Activated T-helper 1 cell treated with anti-CD3 and anti-CD28 coated beads, Interleukin-12 subunit alpha, Interleukin-12 subunit beta, Interleukin-2, Interleukin-4 antibody, amounts not matched to agents 30 ng/mL and 10 ng/mL and 1 ng/mL, durations not matched to agents 14 hours and 24 hours and 36 hours (primary cell): ENCODE measurements at regions of chr16 and their contacts with region 1.

Region 1: DNA sequence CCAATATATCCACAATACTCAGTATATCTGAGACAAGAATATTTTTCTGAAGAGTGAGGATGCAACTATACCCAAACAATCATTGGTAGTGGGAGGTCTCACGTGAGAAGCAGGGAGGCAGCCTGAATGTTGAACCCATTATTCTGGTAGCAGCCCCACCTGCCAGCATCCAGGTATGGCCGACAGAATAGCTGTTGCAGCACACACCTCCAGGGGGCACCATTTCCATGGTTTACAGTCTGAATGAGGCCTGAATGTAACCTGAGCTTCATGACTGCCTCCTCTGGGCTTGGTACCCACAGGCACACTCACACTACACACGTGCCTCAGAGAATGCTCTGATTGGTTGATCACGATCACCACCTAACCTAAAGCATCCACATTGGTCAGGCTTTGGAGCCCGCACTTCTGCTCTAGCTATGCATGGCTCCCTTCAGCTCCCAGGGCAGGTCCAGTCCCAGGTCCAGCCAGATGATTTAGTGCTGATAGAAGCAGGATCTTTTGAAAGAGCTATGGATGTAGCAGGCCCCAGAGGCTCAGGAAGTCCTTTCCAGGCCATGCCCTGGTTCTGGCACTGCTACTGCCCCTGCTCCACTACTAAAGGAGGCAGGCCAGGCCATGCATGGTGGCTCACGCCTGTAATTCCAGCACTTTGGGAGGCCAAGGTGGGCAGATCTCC is 11.0 kb upstream of the CBFB start:
- DNase-seq: peak; percentile 85
- H3K4me3 Mint-ChIP-seq: peak overlapping the region; percentile 7
- H3K27ac Mint-ChIP-seq: peak overlapping the region; percentile 40
- H3K4me1 Mint-ChIP-seq: peaks cover 40% of the 10 kb centered on the region
- H3K27me3 Mint-ChIP-seq: peaks cover 3% of the 10 kb centered on the region

Region 2: DNA sequence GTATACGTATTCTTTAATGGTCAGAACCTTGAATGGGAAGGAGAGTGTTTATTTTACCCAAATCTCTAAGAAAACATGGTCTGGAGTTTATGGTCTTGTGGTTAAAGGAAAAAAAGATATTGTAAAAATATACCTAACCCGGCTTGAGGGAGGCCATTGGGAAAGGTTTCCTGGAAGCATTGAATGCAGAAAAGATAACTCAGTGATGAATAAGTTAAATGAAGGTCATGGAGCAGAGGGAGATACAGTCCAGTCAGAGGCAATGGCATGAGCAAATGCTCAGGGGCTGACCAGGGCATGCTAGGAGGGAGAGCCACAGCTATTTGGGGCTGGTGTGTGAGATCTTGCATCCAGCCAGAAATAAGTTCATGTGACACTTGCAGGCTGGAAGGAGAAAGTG is 1081.9 kb before region 1 on chr16:
- intact Hi-C with region 1: no loop called
- DNase-seq: no peak
- H3K4me3 Mint-ChIP-seq: no peak overlapping the region
- H3K27ac Mint-ChIP-seq: no peak overlapping the region
- H3K4me1 Mint-ChIP-seq: no peaks in the 10 kb centered on the region
- H3K27me3 Mint-ChIP-seq: no peaks in the 10 kb centered on the region

Region 3: GRCh38 chr16:66858740-66859396 is 159.1 kb before region 1 on chr16:
- intact Hi-C with region 1: no loop called
- DNase-seq: no peak
- H3K4me3 Mint-ChIP-seq: no peak overlapping the region
- H3K27ac Mint-ChIP-seq: no peak overlapping the region
- H3K4me1 Mint-ChIP-seq: no peaks in the 10 kb centered on the region
- H3K27me3 Mint-ChIP-seq: peaks cover 1% of the 10 kb centered on the region

Region 4: GRCh38 chr16:66977341-66978113 is 40.4 kb before region 1 on chr16:
- intact Hi-C with region 1: loop called (anchors 1 kb)
- DNase-seq: peak; percentile 83
- H3K4me3 Mint-ChIP-seq: no peak overlapping the region
- H3K27ac Mint-ChIP-seq: peak overlapping the region; percentile 75
- H3K4me1 Mint-ChIP-seq: peaks cover 57% of the 10 kb centered on the region
- H3K27me3 Mint-ChIP-seq: no peaks in the 10 kb centered on the region

Region 5: GRCh38 chr16:67000384-67001351 is 17.3 kb before region 1 on chr16:
- intact Hi-C with region 1: loop called (anchors 1 kb)
- DNase-seq: peak; percentile 55
- H3K4me3 Mint-ChIP-seq: peak overlapping the region; percentile 76
- H3K27ac Mint-ChIP-seq: peak overlapping the region; percentile 88
- H3K4me1 Mint-ChIP-seq: peaks cover 45% of the 10 kb centered on the region
- H3K27me3 Mint-ChIP-seq: no peaks in the 10 kb centered on the region

Region 6: GRCh38 chr16:67055712-67056487 is 38.0 kb after region 1 on chr16:
- intact Hi-C with region 1: loop called (anchors 5 kb)
- DNase-seq: no peak
- H3K4me3 Mint-ChIP-seq: peak overlapping the region; percentile 74
- H3K27ac Mint-ChIP-seq: peak overlapping the region; percentile 96
- H3K4me1 Mint-ChIP-seq: peaks cover 51% of the 10 kb centered on the region
- H3K27me3 Mint-ChIP-seq: no peaks in the 10 kb centered on the region

Region 7: DNA sequence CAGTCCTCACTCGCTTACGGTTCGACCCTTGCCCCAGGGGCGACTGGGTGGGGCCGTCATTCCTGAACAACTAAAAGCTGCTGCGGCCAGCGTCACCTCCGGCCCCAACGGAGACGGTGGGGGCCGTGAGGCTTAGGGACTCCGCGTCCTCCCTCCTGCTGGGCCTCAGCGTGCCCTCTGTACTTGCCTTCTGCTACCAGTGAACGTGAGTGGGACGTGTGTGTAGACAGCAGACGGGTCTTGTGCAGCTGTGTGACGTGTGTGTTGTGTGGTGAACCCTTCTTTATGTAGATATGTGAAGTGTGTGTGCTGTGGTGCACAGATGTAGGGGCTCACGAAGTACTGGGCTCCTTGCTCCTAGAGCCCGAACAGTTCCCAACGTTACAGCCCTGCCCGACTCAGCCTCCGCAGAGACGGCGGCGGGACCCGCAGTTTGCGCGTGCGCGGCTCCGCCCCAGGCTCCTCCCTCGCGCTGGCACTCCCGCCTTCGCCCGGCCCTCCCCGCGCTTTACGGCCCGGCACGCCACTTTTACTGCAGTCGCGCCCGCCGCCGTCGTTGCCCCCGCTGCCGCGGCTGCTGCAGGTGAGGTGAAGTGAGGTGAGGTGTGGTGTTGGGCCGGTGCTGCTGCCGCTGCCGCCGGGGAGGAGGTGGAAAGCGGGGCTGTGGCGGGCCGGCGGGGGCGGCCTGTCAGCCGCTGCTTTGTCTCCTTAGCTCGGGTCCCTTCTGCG is 91.6 kb after region 1 on chr16 and contains the start of gene PHAF1:
- intact Hi-C with region 1: loop called (anchors 2 kb)
- DNase-seq: peak; percentile 93
- H3K4me3 Mint-ChIP-seq: peak within 1 kb of the TSS; percentile 96
- H3K27ac Mint-ChIP-seq: peak within 1 kb of the TSS; percentile 87
- H3K4me1 Mint-ChIP-seq: peaks cover 45% of the 10 kb centered on the region
- H3K27me3 Mint-ChIP-seq: no peaks in the 10 kb centered on the region
- total RNA-seq, gene PHAF1: 20.5 and 20.6 TPM in 2 replicates

Region 8: GRCh38 chr16:67183627-67184328 is 165.8 kb after region 1 on chr16 and contains the start of gene MATCAP1:
- intact Hi-C with region 1: loop called (anchors 1 kb)
- DNase-seq: peak; percentile 94
- H3K4me3 Mint-ChIP-seq: peak within 1 kb of the TSS; percentile 62
- H3K27ac Mint-ChIP-seq: no peak within 1 kb of the TSS
- H3K4me1 Mint-ChIP-seq: peaks cover 20% of the 10 kb centered on the region
- H3K27me3 Mint-ChIP-seq: peaks cover 8% of the 10 kb centered on the region
- total RNA-seq, gene MATCAP1: 45.5 and 48.2 TPM in 2 replicates